ENCODE measurements at regions of chr2 and their contacts with region 1.

Region 1: DNA sequence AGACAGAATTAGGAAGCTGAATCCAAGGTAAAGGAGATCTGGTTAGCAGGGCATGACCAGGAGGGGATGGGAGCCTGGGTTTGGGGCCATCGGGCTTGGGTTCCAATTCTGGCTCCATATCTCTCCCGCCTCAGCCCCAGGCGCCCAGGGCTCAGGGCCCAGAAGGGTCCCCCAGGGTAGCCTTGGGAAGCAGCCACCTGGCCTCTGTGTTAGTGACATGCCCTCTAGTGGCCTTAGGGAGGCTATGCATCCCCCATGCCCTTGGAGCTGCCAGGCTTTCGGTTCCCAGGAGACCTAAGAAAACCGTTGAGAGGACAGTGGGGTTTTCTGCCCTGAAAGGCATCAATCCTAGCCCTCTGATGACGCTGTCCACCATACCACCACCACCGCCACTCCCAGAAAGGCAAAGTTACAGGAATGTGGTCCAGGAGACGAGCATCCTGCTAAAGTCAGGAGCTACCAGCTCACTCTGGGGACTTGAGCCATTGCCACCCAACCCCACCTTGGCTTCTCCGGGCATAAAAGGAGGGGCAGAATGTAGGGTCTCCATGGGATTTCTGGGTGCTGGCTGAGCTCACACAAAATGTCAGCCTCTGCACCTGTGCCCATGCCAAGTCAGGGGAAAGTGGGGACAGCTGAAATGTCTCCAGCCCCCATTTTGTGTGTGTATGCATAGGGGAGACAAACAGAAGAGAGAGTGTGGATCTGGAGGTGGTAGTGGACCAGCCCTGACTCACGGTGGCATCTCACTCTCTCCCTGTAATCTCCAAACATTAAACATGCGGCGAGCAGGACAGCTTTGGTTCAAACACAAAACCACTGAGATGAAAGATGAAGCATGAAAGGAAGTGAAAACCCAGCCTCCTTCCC is 56.5 kb downstream of the EMX1 start:
- DNase-seq: peak; percentile 67 to 89
- ATAC-seq: peak; percentile 91 to 97
- H3K4me3 ChIP-seq: no peak overlapping the region
- H3K27ac ChIP-seq: no peak overlapping the region
- H3K4me1 ChIP-seq: no peaks in the 10 kb centered on the region
- CTCF ChIP-seq: peak; percentile 85
- EP300 ChIP-seq: no peak
- POLR2A ChIP-seq: no peak
- RAD21 ChIP-seq: peak; percentile 66 to 67

Region 2: GRCh38 chr2:72661985-72662384 is 311.8 kb before region 1 on chr2:
- CTCF ChIA-PET with region 1: no interaction called
- POLR2A ChIA-PET with region 1: no interaction called
- DNase-seq: no peak
- ATAC-seq: no peak
- H3K4me3 ChIP-seq: no peak overlapping the region
- H3K27ac ChIP-seq: no peak overlapping the region
- H3K4me1 ChIP-seq: no peaks in the 10 kb centered on the region
- CTCF ChIP-seq: no peak
- EP300 ChIP-seq: no peak
- POLR2A ChIP-seq: no peak
- RAD21 ChIP-seq: no peak

Region 3: GRCh38 chr2:72901426-72901825 is 72.4 kb before region 1 on chr2:
- CTCF ChIA-PET with region 1: interaction called, 208 read pairs
- POLR2A ChIA-PET with region 1: no interaction called
- DNase-seq: no peak
- ATAC-seq: no peak
- H3K4me3 ChIP-seq: no peak overlapping the region
- H3K27ac ChIP-seq: no peak overlapping the region
- H3K4me1 ChIP-seq: peaks cover 4% of the 10 kb centered on the region; the same call in 1 of the 3 replicates
- CTCF ChIP-seq: no peak
- EP300 ChIP-seq: no peak
- POLR2A ChIP-seq: no peak
- RAD21 ChIP-seq: no peak

Region 4: DNA sequence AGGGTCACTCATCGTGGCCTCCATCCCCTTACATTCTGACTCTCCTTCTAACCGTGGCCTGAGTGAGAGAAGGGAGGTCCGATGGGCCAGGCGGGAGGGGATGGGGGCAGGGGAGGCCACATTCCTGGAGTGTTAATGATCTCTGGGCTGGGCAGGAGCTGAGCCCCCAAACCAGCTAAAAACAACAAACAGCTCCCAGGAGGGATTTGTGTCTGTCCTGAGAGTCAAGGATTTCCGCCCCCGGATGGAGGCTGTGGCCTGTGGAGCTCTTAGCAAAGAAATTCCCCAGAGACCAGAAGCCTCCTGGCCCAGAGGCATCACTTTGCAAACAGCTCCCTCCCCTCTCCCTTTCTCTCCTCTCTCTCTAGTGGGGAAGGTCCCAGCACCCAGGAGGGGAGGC is 33.0 kb before region 1 on chr2:
- CTCF ChIA-PET with region 1: interaction called, 11 read pairs
- POLR2A ChIA-PET with region 1: no interaction called
- DNase-seq: no peak
- ATAC-seq: no peak
- H3K4me3 ChIP-seq: no peak overlapping the region
- H3K27ac ChIP-seq: no peak overlapping the region
- H3K4me1 ChIP-seq: no peaks in the 10 kb centered on the region
- CTCF ChIP-seq: no peak
- EP300 ChIP-seq: no peak
- POLR2A ChIP-seq: no peak
- RAD21 ChIP-seq: no peak

Region 5: DNA sequence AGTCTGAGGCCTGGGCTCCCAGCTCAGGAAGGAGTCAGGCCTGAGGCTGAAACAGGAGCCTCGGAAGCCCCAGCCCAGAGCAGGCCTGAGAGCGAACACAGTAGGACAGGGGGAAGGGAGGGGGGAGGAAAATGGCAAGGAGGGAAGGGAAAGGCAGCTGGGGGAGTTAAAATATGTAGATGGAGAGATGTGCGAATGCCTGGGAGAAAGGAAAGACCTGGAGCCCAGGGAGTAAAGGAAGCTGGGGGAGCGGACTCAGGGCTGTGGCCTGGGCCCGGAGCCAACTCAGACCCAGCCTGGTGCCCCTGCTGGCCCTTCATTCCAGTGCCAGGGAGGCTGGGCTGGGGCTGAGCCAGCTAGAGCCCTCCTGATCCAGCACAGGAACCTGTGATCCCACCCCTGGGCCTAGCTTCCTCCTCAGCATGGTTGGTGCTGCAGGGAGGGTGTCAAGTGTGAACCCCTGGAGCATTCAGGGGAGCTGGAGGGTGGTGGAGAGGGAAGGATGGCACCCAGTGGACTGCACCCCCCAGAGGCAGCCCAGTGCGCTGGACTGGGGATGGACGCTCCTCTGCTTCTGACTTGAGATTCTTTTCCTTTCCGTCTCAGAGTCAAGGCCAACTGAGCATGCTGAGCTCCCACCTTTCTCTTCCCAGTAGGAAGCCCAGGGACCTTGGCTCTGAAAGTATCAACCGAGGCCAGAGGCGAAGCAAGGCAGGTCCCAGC is 10.2 kb before region 1 on chr2:
- CTCF ChIA-PET with region 1: interaction called, 19 read pairs
- POLR2A ChIA-PET with region 1: no interaction called
- DNase-seq: no peak
- ATAC-seq: peak in 1 of 2 experiments; percentile 19; a peak in 3 of 6 replicates
- H3K4me3 ChIP-seq: no peak overlapping the region
- H3K27ac ChIP-seq: no peak overlapping the region
- H3K4me1 ChIP-seq: no peaks in the 10 kb centered on the region
- CTCF ChIP-seq: no peak
- EP300 ChIP-seq: no peak
- POLR2A ChIP-seq: no peak
- RAD21 ChIP-seq: no peak

Region 6: GRCh38 chr2:73006969-73007710 is 33.3 kb after region 1 on chr2:
- CTCF ChIA-PET with region 1: interaction called, 11 read pairs
- POLR2A ChIA-PET with region 1: no interaction called
- DNase-seq: no peak
- ATAC-seq: no peak
- H3K4me3 ChIP-seq: no peak overlapping the region
- H3K27ac ChIP-seq: no peak overlapping the region
- H3K4me1 ChIP-seq: no peaks in the 10 kb centered on the region
- CTCF ChIP-seq: no peak
- EP300 ChIP-seq: no peak
- POLR2A ChIP-seq: no peak
- RAD21 ChIP-seq: no peak

Region 7: GRCh38 chr2:73163483-73164367 is 189.9 kb after region 1 on chr2:
- CTCF ChIA-PET with region 1: interaction called, 12 read pairs
- POLR2A ChIA-PET with region 1: no interaction called
- DNase-seq: peak; percentile 82 to 88
- ATAC-seq: peak; percentile 94 to 99
- H3K4me3 ChIP-seq: no peak overlapping the region
- H3K27ac ChIP-seq: no peak overlapping the region
- H3K4me1 ChIP-seq: no peaks in the 10 kb centered on the region
- CTCF ChIP-seq: peak; percentile 96
- EP300 ChIP-seq: no peak
- POLR2A ChIP-seq: no peak
- RAD21 ChIP-seq: peak; percentile 95 to 96